ENCODE measurements at regions of chr15 and their contacts with region 1.

Region 1: GRCh38 chr15:76366714-76367113 is 30.1 kb downstream of the ISL2 start:
- DNase-seq: no peak
- H3K4me3 ChIP-seq: no peak overlapping the region
- H3K4me3 Mint-ChIP-seq: no peak overlapping the region
- H3K27ac ChIP-seq: no peak overlapping the region
- H3K27ac Mint-ChIP-seq: no peak overlapping the region
- H3K4me1 ChIP-seq: no peaks in the 10 kb centered on the region
- H3K4me1 Mint-ChIP-seq: no peaks in the 10 kb centered on the region
- H3K27me3 ChIP-seq: no peaks in the 10 kb centered on the region
- H3K27me3 Mint-ChIP-seq: no peaks in the 10 kb centered on the region

Region 2: GRCh38 chr15:76345880-76346668 is 20.6 kb before region 1 on chr15:
- CTCF ChIA-PET with region 1: no interaction called
- POLR2A ChIA-PET with region 1: interaction called, 10 read pairs
- DNase-seq: peak in 1 of 5 donors; percentile 9
- H3K4me3 ChIP-seq: no peak overlapping the region
- H3K4me3 Mint-ChIP-seq: peak overlapping the region; percentile 41 to 91 (median 68)
- H3K27ac ChIP-seq: no peak overlapping the region
- H3K27ac Mint-ChIP-seq: peak overlapping the region in 3 of 8 donors; percentile 5 to 41 (median 16)
- H3K4me1 ChIP-seq: peaks cover 26% of the 10 kb centered on the region
- H3K4me1 Mint-ChIP-seq: peaks cover 20 to 33% (median 31%) of the 10 kb centered on the region in 3 donors
- H3K27me3 ChIP-seq: peaks cover 53% of the 10 kb centered on the region
- H3K27me3 Mint-ChIP-seq: peaks cover 56 to 57% of the 10 kb centered on the region in 2 donors

Measured in CD8-positive, alpha-beta memory T cell (primary cell).